Calu3 (cell line): ENCODE measurements at regions of chr2 and their contacts with region 1.

Region 1: DNA sequence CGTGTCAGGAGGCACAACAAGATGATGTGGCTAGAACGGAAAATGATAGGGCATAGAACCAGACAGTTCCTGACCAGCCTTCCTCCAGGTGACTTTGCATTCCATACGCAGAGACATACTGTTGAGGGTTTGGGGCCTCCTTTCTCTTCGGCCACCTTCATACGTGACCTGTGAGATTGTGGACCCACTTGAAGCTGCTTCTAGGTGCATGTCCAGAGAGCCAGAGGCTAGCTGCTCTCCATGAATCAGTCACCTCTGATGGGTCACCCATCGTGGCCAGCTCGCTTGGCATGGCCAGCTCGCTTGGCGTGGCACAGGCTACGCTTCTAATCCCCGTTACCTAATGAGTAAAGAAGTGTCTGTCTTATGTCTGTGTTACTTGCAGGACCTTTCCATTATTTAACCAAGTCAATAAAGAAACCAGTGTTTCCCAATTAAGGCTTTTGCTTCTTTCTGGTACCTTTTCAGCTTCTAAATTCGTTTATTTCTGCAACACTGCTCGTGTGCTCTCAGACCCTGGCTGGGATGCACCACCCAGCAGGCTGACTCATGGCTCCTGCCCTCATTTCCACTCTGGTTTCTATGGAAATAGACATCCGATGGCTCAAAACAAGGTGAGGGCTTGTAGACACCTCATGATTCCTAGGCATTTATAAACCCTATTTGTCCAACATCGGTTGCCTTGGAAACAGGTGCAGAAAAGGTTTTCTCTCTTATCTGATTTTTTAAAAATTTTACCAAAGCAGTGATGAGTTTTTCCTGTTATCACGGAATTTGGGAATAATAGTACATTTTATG is 86.7 kb upstream of the B3GNT7 start:
- DNase-seq: no peak
- H3K4me3 Mint-ChIP-seq: no peak overlapping the region
- H3K27ac Mint-ChIP-seq: no peak overlapping the region
- H3K4me1 Mint-ChIP-seq: peaks cover 11% of the 10 kb centered on the region
- H3K27me3 Mint-ChIP-seq: no peaks in the 10 kb centered on the region
- CTCF ChIP-seq: no peak

Region 2: GRCh38 chr2:231342061-231342711 is 33.4 kb after region 1 on chr2:
- CTCF ChIA-PET with region 1: no interaction called
- intact Hi-C with region 1: loop called (anchors 5 kb)
- DNase-seq: no peak
- H3K4me3 Mint-ChIP-seq: no peak overlapping the region
- H3K27ac Mint-ChIP-seq: no peak overlapping the region
- H3K4me1 Mint-ChIP-seq: peaks cover 15% of the 10 kb centered on the region
- H3K27me3 Mint-ChIP-seq: no peaks in the 10 kb centered on the region
- CTCF ChIP-seq: no peak